Activated CD4-positive, alpha-beta memory T cell treated with anti-CD3 and anti-CD28 coated beads, Interleukin-2, amount 10 ng/mL, durations not matched to agents 7 days and 5 days (primary cell): ENCODE measurements at regions of chr9 and their contacts with region 1.

Region 1: DNA sequence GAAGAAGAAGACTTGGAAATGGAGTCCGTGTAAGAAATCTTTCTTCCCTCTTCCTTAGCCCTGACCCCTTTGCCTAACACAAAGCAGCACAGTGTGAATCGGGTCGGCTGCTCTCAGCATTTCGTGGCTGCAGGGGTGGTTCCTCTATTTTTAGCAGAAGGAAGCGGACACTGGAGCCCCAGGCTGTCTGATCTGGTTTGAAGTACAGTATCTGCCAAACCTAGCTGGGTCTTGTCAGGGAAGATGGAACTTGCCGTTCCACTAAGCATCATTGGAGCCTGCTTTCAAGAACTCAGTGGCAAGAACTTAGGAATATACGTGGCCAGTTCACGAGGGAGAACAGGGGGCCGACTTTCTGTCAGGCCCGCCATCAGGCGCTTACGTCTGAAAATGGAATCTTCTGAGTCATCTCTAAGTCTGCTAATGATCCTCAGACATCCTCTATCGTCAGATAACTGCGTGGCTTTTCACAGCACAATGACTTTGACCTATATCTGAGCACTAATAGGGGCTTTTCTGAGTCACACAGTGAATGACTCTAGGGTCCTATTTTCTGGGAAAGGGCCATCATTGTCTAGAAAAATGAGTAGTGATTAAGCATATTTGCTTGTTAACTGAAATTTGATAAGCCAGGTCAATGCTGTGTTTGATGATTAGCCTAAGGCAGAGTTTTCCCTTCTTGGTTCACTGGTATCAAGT is 43.3 kb upstream of the NCS1 start:
- DNase-seq: peak; percentile 64
- H3K4me3 Mint-ChIP-seq: peak overlapping the region; percentile 67
- H3K27ac Mint-ChIP-seq: peak overlapping the region; percentile 100
- H3K4me1 Mint-ChIP-seq: peaks cover 54% of the 10 kb centered on the region
- H3K27me3 Mint-ChIP-seq: no peaks in the 10 kb centered on the region

Region 2: DNA sequence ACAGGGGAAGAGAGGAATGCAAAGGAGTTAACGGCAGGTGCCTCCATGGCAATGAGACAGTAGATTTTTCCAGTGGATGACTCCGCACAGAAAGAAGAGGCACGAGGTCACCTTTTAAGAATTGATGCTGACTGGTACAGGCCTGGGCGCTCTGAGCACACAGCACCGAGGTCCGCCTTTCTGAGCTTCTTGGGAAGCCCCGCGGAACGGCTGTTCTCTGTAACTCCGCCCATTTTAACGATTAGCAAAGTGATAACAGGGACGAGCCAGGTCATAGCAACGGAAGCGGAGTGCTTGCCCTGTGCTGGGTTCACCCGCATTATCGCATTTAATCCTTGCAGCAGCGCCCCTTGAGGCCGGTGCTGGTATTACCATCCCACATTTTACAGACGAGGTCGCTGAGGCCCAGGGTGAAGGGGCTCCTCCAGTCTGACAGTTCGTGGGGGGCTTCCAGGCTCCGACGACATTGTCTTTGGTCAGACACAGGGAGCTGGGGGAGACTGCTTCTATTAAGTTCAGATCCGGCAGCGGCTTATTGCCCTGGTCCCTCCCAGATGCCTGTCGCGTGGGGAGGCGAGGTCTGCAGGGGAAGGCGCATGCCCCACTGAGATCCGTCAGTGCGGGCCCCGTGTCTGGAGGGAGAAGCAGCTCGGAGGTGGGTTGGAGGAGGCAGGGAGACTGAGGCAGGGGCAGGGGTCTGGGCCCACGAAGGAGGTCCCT is 114.3 kb after region 1 on chr9:
- CTCF ChIA-PET with region 1: interaction called, 8 read pairs
- POLR2A ChIA-PET with region 1: interaction called, 10 read pairs
- DNase-seq: peak; percentile 84
- H3K4me3 Mint-ChIP-seq: peak overlapping the region; percentile 52
- H3K27ac Mint-ChIP-seq: peak overlapping the region; percentile 66
- H3K4me1 Mint-ChIP-seq: peaks cover 37% of the 10 kb centered on the region
- H3K27me3 Mint-ChIP-seq: no peaks in the 10 kb centered on the region